Endothelial cell of umbilical vein (primary cell): ENCODE measurements at regions of chrX and their contacts with region 1.

Region 1: GRCh38 chrX:8743126-8743732 is 11.3 kb upstream of the ANOS1 start:
- DNase-seq: peak; percentile 26
- H3K4me3 ChIP-seq: no peak overlapping the region
- H3K27ac ChIP-seq: no peak overlapping the region
- H3K4me1 ChIP-seq: no peaks in the 10 kb centered on the region
- H3K27me3 ChIP-seq: no peaks in the 10 kb centered on the region
- CTCF ChIP-seq: peak; percentile 59 to 67
- POLR2A ChIP-seq: no peak

Region 2: GRCh38 chrX:7996414-7996813 is 746.8 kb before region 1 on chrX:
- CTCF ChIA-PET with region 1: interaction called, 13 read pairs
- POLR2A ChIA-PET with region 1: no interaction called
- dilution Hi-C with region 1: no loop called
- intact Hi-C with region 1: loop called (anchors 1 kb)
- DNase-seq: peak; percentile 18
- H3K4me3 ChIP-seq: no peak overlapping the region
- H3K27ac ChIP-seq: no peak overlapping the region
- H3K4me1 ChIP-seq: no peaks in the 10 kb centered on the region
- H3K27me3 ChIP-seq: no peaks in the 10 kb centered on the region
- CTCF ChIP-seq: peak; percentile 13 to 21
- POLR2A ChIP-seq: no peak

Region 3: DNA sequence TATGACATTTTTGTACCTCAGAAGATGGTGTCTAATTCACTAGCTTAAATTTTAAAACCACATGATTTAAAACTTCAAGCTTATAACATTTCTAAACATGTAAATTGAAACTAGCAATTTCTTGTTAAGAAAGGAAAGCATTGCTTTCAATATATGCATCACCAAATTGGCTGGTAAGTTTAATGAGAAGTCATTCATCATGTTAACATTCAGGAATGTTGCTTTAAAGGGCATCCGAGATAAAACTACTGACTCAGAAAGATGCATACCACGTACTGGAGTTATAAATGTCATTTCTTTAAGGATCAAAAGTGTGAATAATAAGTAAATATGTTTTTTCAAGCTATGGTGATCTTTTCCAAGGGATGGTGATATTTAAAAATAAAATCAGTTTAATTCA is 488.8 kb before region 1 on chrX:
- CTCF ChIA-PET with region 1: no interaction called
- POLR2A ChIA-PET with region 1: no interaction called
- dilution Hi-C with region 1: no loop called
- intact Hi-C with region 1: no loop called
- DNase-seq: no peak
- H3K4me3 ChIP-seq: no peak overlapping the region
- H3K27ac ChIP-seq: no peak overlapping the region
- H3K4me1 ChIP-seq: no peaks in the 10 kb centered on the region
- H3K27me3 ChIP-seq: no peaks in the 10 kb centered on the region
- CTCF ChIP-seq: no peak
- POLR2A ChIP-seq: no peak

Region 4: GRCh38 chrX:8323356-8323755 is 419.9 kb before region 1 on chrX:
- CTCF ChIA-PET with region 1: no interaction called
- POLR2A ChIA-PET with region 1: no interaction called
- dilution Hi-C with region 1: no loop called
- intact Hi-C with region 1: loop called (anchors 2 kb)
- DNase-seq: no peak
- H3K4me3 ChIP-seq: no peak overlapping the region
- H3K27ac ChIP-seq: no peak overlapping the region
- H3K4me1 ChIP-seq: no peaks in the 10 kb centered on the region
- H3K27me3 ChIP-seq: no peaks in the 10 kb centered on the region
- CTCF ChIP-seq: no peak
- POLR2A ChIP-seq: no peak

Region 5: GRCh38 chrX:8647066-8647582 is 96.1 kb before region 1 on chrX:
- CTCF ChIA-PET with region 1: no interaction called
- POLR2A ChIA-PET with region 1: no interaction called
- dilution Hi-C with region 1: no loop called
- intact Hi-C with region 1: no loop called
- DNase-seq: no peak
- H3K4me3 ChIP-seq: no peak overlapping the region
- H3K27ac ChIP-seq: no peak overlapping the region
- H3K4me1 ChIP-seq: no peaks in the 10 kb centered on the region
- H3K27me3 ChIP-seq: no peaks in the 10 kb centered on the region
- CTCF ChIP-seq: no peak
- POLR2A ChIP-seq: no peak

Region 6: GRCh38 chrX:8731559-8732395 is 11.5 kb before region 1 on chrX and contains the start of gene ANOS1:
- CTCF ChIA-PET with region 1: interaction called, 12 read pairs
- POLR2A ChIA-PET with region 1: no interaction called
- dilution Hi-C with region 1: no loop called
- intact Hi-C with region 1: no loop called
- DNase-seq: peak; percentile 52
- H3K4me3 ChIP-seq: peak within 1 kb of the TSS; percentile 16 to 38 (median 36)
- H3K27ac ChIP-seq: no peak within 1 kb of the TSS
- H3K4me1 ChIP-seq: peaks cover 4% of the 10 kb centered on the region
- H3K27me3 ChIP-seq: peaks cover 3 to 4% of the 10 kb centered on the region in 2 experiments
- CTCF ChIP-seq: no peak
- POLR2A ChIP-seq: no peak
- total RNA-seq, gene ANOS1: 0.18 and 0.55 TPM in 2 replicates

Region 7: DNA sequence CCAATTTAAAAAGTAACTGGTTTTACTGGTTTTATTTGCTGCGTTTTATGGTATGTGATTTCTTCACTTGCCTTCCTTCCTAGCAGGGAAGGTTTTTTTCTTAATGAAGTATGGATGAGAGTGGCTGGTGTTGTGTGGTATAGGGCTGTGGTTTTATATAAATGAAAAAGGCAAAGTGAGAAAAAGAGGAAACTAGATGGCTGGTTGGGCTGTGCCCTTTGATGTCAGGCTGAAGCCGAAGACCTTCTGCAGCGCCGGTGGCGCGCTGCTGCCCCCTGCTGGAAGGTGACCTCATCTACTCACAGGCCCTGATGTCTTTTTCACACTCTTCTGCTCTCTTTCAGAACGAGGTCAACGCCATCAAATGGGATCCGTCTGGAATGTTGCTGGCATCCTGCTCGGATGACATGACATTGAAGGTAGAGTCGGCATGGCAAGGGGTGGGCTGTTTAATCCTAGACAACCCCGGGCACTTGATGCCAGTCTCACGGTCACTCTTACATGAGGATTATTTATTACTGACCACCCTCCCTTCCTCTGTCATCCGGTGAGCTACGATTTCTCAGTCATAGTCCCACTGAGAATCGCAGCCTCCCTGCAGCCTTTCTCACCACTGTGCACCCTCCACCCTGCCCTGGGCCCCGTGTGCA is 965.8 kb after region 1 on chrX:
- CTCF ChIA-PET with region 1: no interaction called
- POLR2A ChIA-PET with region 1: no interaction called
- dilution Hi-C with region 1: no loop called
- intact Hi-C with region 1: loop called (anchors 10 kb)
- DNase-seq: peak; percentile 67
- H3K4me3 ChIP-seq: no peak overlapping the region
- H3K27ac ChIP-seq: no peak overlapping the region
- H3K4me1 ChIP-seq: no peaks in the 10 kb centered on the region
- H3K27me3 ChIP-seq: no peaks in the 10 kb centered on the region
- CTCF ChIP-seq: peak; percentile 48 to 79
- POLR2A ChIP-seq: no peak